ENCODE measurements at regions of chr16 and their contacts with region 1.

Region 1: GRCh38 chr16:26795184-26795583 is 271.5 kb upstream of the C16orf82 start:
- DNase-seq: no peak
- ATAC-seq: no peak
- H3K4me3 ChIP-seq: no peak overlapping the region
- H3K27ac ChIP-seq: no peak overlapping the region
- H3K4me1 ChIP-seq: no peaks in the 10 kb centered on the region
- H3K27me3 ChIP-seq: peaks cover 0 to 8% (median 0%) of the 10 kb centered on the region in 7 donors
- CTCF ChIP-seq: peak in 6 of 9 donors; percentile 32 to 54 (median 38)

Region 2: GRCh38 chr16:26475596-26475995 is 319.6 kb before region 1 on chr16:
- intact Hi-C with region 1: no loop called
- DNase-seq: no peak
- ATAC-seq: peak in 5 of 8 donors; percentile 29 to 70 (median 38)
- H3K4me3 ChIP-seq: no peak overlapping the region
- H3K27ac ChIP-seq: peak overlapping the region in 1 of 10 donors; percentile 10
- H3K4me1 ChIP-seq: peaks cover 0 to 9% (median 0%) of the 10 kb centered on the region in 9 donors
- H3K27me3 ChIP-seq: no peaks in the 10 kb centered on the region
- CTCF ChIP-seq: no peak

Region 3: DNA sequence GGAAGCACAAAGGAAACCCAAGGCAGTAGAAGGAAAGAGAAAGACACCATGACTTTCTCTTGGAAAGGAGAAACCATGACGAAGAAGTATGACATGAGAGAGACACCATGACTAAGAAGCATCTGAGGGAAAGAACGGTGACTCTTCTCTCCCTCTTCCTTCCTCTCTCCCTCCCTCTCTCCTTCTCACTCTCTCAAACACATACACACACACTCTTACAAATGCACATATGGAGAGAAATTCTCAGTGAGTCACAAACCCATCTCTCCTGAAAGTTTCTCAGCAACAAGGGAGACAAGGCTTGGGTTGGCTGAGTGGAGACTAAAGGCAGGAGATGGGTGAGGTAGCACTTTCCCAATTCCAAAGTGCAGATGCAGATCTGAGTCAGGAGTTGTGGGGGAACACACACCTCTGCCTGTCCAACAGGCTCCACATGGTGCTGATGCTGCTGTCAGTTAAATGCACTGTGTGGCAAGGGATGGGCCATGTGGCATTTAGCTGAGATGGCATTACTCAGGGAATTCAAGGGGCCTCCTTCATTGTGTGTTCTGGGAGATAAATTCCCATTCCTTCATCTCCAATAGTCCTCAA is 65.1 kb before region 1 on chr16:
- intact Hi-C with region 1: loop called in 1 of 10 experiments (anchors 10 kb)
- DNase-seq: no peak
- ATAC-seq: no peak
- H3K4me3 ChIP-seq: no peak overlapping the region
- H3K27ac ChIP-seq: no peak overlapping the region
- H3K4me1 ChIP-seq: no peaks in the 10 kb centered on the region
- H3K27me3 ChIP-seq: no peaks in the 10 kb centered on the region
- CTCF ChIP-seq: no peak

Region 4: GRCh38 chr16:26772503-26772902 is 22.7 kb before region 1 on chr16:
- intact Hi-C with region 1: no loop called
- DNase-seq: no peak
- ATAC-seq: no peak
- H3K4me3 ChIP-seq: no peak overlapping the region
- H3K27ac ChIP-seq: no peak overlapping the region
- H3K4me1 ChIP-seq: no peaks in the 10 kb centered on the region
- H3K27me3 ChIP-seq: peaks cover 0 to 20% (median 0%) of the 10 kb centered on the region in 7 donors
- CTCF ChIP-seq: no peak

Region 5: GRCh38 chr16:26838931-26839330 is 43.7 kb after region 1 on chr16:
- intact Hi-C with region 1: loop called in 1 of 10 experiments (anchors 1 kb)
- DNase-seq: no peak
- ATAC-seq: no peak
- H3K4me3 ChIP-seq: no peak overlapping the region
- H3K27ac ChIP-seq: no peak overlapping the region
- H3K4me1 ChIP-seq: no peaks in the 10 kb centered on the region
- H3K27me3 ChIP-seq: no peaks in the 10 kb centered on the region
- CTCF ChIP-seq: no peak